ENCODE measurements at regions of chr10 and their contacts with region 1.

Region 1: GRCh38 chr10:47247148-47248059 is 52.6 kb upstream of the GDF10 start:
- DNase-seq: no peak
- H3K4me3 ChIP-seq: no peak overlapping the region
- H3K27ac ChIP-seq: no peak overlapping the region
- H3K4me1 ChIP-seq: no peaks in the 10 kb centered on the region
- H3K27me3 ChIP-seq: no peaks in the 10 kb centered on the region
- CTCF ChIP-seq: no peak
- POLR2A ChIP-seq: no peak

Region 2: DNA sequence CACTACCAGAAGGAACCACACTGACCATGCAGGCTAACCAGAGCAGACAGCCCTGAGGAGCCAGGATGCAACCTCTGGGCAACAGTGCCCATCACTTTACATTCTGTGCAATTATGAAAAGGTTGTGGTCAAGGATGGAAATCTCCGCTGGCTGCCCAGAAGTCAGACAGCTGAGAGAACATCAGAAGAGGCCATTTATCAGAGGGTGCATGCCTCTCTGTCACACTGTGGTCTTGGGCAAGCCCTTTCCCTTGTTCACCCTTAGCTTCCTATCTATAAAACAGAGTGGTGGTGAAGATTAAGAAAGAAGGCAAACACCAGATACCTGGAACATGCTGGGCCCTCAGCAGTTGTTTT is 68.1 kb before region 1 on chr10:
- intact Hi-C with region 1: loop called (anchors 2 kb)
- DNase-seq: no peak
- H3K4me3 ChIP-seq: no peak overlapping the region
- H3K27ac ChIP-seq: no peak overlapping the region
- H3K4me1 ChIP-seq: no peaks in the 10 kb centered on the region
- H3K27me3 ChIP-seq: no peaks in the 10 kb centered on the region
- CTCF ChIP-seq: no peak
- POLR2A ChIP-seq: no peak

Region 3: GRCh38 chr10:47269294-47269693 is 21.9 kb after region 1 on chr10:
- intact Hi-C with region 1: no loop called
- DNase-seq: no peak
- H3K4me3 ChIP-seq: no peak overlapping the region
- H3K27ac ChIP-seq: no peak overlapping the region
- H3K4me1 ChIP-seq: no peaks in the 10 kb centered on the region
- H3K27me3 ChIP-seq: no peaks in the 10 kb centered on the region
- CTCF ChIP-seq: no peak
- POLR2A ChIP-seq: no peak